ENCODE measurements at regions of chr3 and their contacts with region 1.

Region 1: GRCh38 chr3:112642912-112643506 is 2.1 kb upstream of the CCDC80 start:
- DNase-seq: peak; percentile 92
- ATAC-seq: peak; percentile 67
- H3K4me3 ChIP-seq: no peak overlapping the region
- H3K27ac ChIP-seq: 0 out of 2 replicates have a peak overlapping the region, but pooled peaks have one; percentile 32
- H3K4me1 ChIP-seq: peaks cover 38% of the 10 kb centered on the region
- H3K27me3 ChIP-seq: no peaks in the 10 kb centered on the region
- CTCF ChIP-seq: peak; percentile 98
- POLR2A ChIP-seq: peak; percentile 66; the same call in 1 of the 2 replicates
- RAD21 ChIP-seq: peak; percentile 99

Region 2: DNA sequence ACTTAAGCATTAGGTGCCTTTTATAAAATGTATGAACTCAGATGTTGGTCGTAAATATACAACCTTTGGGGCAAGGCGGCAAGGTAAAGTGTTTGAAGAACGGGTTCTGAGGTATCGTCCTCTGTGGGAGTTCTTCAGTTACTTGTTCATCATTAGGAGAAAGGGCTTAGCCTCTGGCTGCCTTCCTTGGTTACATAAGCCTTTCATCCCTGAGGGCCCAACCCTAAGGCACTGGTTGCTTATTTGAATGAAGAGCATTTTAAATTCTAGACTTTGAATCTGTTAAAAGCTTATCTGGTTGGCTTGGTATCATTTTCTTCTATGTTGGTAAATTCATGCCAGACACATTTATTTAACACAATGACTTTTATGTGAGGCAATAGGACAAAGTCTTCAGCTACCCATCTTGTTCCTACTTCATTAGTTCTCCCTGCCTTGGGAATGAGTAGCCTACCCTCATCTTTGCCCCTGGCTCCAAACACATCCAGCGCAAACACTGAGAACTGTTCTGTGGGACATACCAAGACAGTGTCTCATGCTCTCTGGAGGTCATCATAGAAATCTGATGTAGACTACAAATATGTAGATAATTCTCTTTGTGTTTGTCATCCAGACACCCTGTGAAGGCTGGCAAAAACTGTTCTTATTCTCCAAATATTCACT is 10.3 kb after region 1 on chr3:
- CTCF ChIA-PET with region 1: interaction called, 13 read pairs
- POLR2A ChIA-PET with region 1: interaction called, 9 read pairs
- dilution Hi-C with region 1: no loop called
- in situ Hi-C with region 1: no loop called
- intact Hi-C with region 1: no loop called
- DNase-seq: peak; percentile 98
- ATAC-seq: peak; percentile 86
- H3K4me3 ChIP-seq: no peak overlapping the region
- H3K27ac ChIP-seq: peak overlapping the region; percentile 95
- H3K4me1 ChIP-seq: peaks cover 19% of the 10 kb centered on the region
- H3K27me3 ChIP-seq: no peaks in the 10 kb centered on the region
- CTCF ChIP-seq: no peak
- POLR2A ChIP-seq: peak; percentile 60; the same call in 1 of the 2 replicates
- RAD21 ChIP-seq: peak; percentile 27; the same call in 1 of the 2 replicates

Region 3: GRCh38 chr3:112693186-112693585 is 50.2 kb after region 1 on chr3:
- CTCF ChIA-PET with region 1: interaction called, 4 read pairs
- POLR2A ChIA-PET with region 1: no interaction called
- dilution Hi-C with region 1: no loop called
- in situ Hi-C with region 1: loop called (anchors 5 kb)
- intact Hi-C with region 1: no loop called
- DNase-seq: no peak
- ATAC-seq: no peak
- H3K4me3 ChIP-seq: no peak overlapping the region
- H3K27ac ChIP-seq: no peak overlapping the region
- H3K4me1 ChIP-seq: peaks cover 22% of the 10 kb centered on the region
- H3K27me3 ChIP-seq: no peaks in the 10 kb centered on the region
- CTCF ChIP-seq: no peak
- POLR2A ChIP-seq: no peak
- RAD21 ChIP-seq: no peak

Region 4: DNA sequence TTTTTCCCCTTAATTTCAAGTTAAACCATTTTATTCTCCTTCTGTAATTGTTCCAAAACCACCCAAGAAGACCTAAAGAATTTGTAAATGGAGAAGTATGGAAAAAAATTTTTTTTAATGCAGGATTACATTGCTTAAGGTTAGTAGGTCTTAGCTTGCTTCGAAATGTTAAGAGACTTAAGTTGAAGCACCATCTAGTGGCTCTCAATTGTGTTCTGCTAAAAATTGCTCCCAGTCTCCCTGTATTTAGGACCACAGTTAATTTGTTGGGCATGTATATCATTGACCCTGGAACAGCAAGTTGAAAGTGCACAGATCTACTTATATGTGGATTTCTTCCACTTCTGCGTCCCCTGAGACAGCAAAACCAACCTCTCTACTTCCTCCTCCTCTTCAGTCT is 171.3 kb after region 1 on chr3:
- CTCF ChIA-PET with region 1: interaction called, 34 read pairs
- POLR2A ChIA-PET with region 1: interaction called, 4 read pairs
- dilution Hi-C with region 1: no loop called
- in situ Hi-C with region 1: loop called (anchors 5 kb)
- intact Hi-C with region 1: loop called (anchors 1 kb)
- DNase-seq: peak; percentile 89
- ATAC-seq: peak; percentile 64
- H3K4me3 ChIP-seq: no peak overlapping the region
- H3K27ac ChIP-seq: peak overlapping the region; percentile 32; the same call in 1 of the 2 replicates
- H3K4me1 ChIP-seq: peaks cover 30% of the 10 kb centered on the region
- H3K27me3 ChIP-seq: no peaks in the 10 kb centered on the region
- CTCF ChIP-seq: peak; percentile 74
- POLR2A ChIP-seq: no peak
- RAD21 ChIP-seq: peak; percentile 83

Region 5: DNA sequence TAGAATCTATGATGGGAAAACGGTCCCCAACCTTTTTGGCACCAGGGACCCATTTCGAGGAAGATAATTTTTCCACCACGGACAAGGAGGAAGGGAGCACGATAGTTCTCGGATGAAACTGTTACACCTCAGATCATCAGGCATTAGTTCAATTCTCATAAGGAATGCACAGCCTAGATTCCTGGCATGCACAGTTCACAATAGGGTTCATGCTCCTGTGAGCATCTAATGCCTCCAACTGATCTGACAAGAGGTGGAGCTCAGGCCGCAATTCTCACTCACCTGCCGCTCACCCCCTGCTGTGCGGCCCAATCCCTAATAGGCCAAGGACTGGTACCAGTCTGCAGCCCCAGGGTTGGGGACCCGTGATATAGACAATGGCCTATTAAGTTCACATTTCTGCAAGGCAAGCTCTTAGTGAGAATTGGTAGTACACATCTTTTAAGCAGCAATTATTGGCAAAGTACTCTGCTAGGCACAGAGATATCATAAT is 305.4 kb after region 1 on chr3:
- CTCF ChIA-PET with region 1: no interaction called
- POLR2A ChIA-PET with region 1: no interaction called
- dilution Hi-C with region 1: no loop called
- in situ Hi-C with region 1: no loop called
- intact Hi-C with region 1: no loop called
- DNase-seq: no peak
- ATAC-seq: no peak
- H3K4me3 ChIP-seq: no peak overlapping the region
- H3K27ac ChIP-seq: no peak overlapping the region
- H3K4me1 ChIP-seq: no peaks in the 10 kb centered on the region
- H3K27me3 ChIP-seq: 0 out of 2 replicates have a peak, but pooled peaks cover 1% of the 10 kb centered on the region
- CTCF ChIP-seq: no peak
- POLR2A ChIP-seq: no peak
- RAD21 ChIP-seq: no peak

Region 6: GRCh38 chr3:112990672-112991602 is 347.9 kb after region 1 on chr3 and contains the start of gene GTPBP8:
- CTCF ChIA-PET with region 1: interaction called, 3 read pairs
- POLR2A ChIA-PET with region 1: interaction called, 3 read pairs
- dilution Hi-C with region 1: no loop called
- in situ Hi-C with region 1: loop called (anchors 5 kb)
- intact Hi-C with region 1: loop called (anchors 5 kb)
- DNase-seq: peak; percentile 84
- ATAC-seq: peak; percentile 98
- H3K4me3 ChIP-seq: peak within 1 kb of the TSS; percentile 75
- H3K27ac ChIP-seq: peak within 1 kb of the TSS; percentile 86
- H3K4me1 ChIP-seq: no peaks in the 10 kb centered on the region
- H3K27me3 ChIP-seq: peaks cover 2% of the 10 kb centered on the region; the same call in 1 of the 2 replicates
- CTCF ChIP-seq: no peak
- POLR2A ChIP-seq: peak; percentile 83
- RAD21 ChIP-seq: no peak
- total RNA-seq, gene GTPBP8: 15.4 and 19.4 TPM in 2 replicates

Region 7: GRCh38 chr3:113148286-113148685 is 505.3 kb after region 1 on chr3:
- CTCF ChIA-PET with region 1: no interaction called
- POLR2A ChIA-PET with region 1: no interaction called
- dilution Hi-C with region 1: no loop called
- in situ Hi-C with region 1: no loop called
- intact Hi-C with region 1: no loop called
- DNase-seq: no peak
- ATAC-seq: no peak
- H3K4me3 ChIP-seq: no peak overlapping the region
- H3K27ac ChIP-seq: no peak overlapping the region
- H3K4me1 ChIP-seq: peaks cover 4% of the 10 kb centered on the region; the same call in 1 of the 2 replicates
- H3K27me3 ChIP-seq: peaks cover 26% of the 10 kb centered on the region
- CTCF ChIP-seq: no peak
- POLR2A ChIP-seq: no peak
- RAD21 ChIP-seq: no peak

Region 8: GRCh38 chr3:113626503-113627371 is 983.7 kb after region 1 on chr3:
- CTCF ChIA-PET with region 1: no interaction called
- POLR2A ChIA-PET with region 1: no interaction called
- dilution Hi-C with region 1: no loop called
- in situ Hi-C with region 1: no loop called
- intact Hi-C with region 1: loop called (anchors 10 kb)
- DNase-seq: peak; percentile 58
- ATAC-seq: peak; percentile 93
- H3K4me3 ChIP-seq: no peak overlapping the region
- H3K27ac ChIP-seq: no peak overlapping the region
- H3K4me1 ChIP-seq: peaks cover 2% of the 10 kb centered on the region; the same call in 1 of the 2 replicates
- H3K27me3 ChIP-seq: peaks cover 13% of the 10 kb centered on the region
- CTCF ChIP-seq: peak; percentile 83
- POLR2A ChIP-seq: no peak
- RAD21 ChIP-seq: peak; percentile 82

Region 9: GRCh38 chr3:114207768-114208167 is 1564.8 kb after region 1 on chr3:
- CTCF ChIA-PET with region 1: no interaction called
- POLR2A ChIA-PET with region 1: no interaction called
- dilution Hi-C with region 1: no loop called
- in situ Hi-C with region 1: no loop called
- intact Hi-C with region 1: no loop called
- DNase-seq: no peak
- ATAC-seq: no peak
- H3K4me3 ChIP-seq: no peak overlapping the region
- H3K27ac ChIP-seq: no peak overlapping the region
- H3K4me1 ChIP-seq: no peaks in the 10 kb centered on the region
- H3K27me3 ChIP-seq: peaks cover 7% of the 10 kb centered on the region
- CTCF ChIP-seq: no peak
- POLR2A ChIP-seq: no peak
- RAD21 ChIP-seq: no peak

Measured in IMR-90 (cell line).